Heart right ventricle (tissue), 16 donors: ENCODE measurements at regions of chr14 and their contacts with region 1.

Region 1: DNA sequence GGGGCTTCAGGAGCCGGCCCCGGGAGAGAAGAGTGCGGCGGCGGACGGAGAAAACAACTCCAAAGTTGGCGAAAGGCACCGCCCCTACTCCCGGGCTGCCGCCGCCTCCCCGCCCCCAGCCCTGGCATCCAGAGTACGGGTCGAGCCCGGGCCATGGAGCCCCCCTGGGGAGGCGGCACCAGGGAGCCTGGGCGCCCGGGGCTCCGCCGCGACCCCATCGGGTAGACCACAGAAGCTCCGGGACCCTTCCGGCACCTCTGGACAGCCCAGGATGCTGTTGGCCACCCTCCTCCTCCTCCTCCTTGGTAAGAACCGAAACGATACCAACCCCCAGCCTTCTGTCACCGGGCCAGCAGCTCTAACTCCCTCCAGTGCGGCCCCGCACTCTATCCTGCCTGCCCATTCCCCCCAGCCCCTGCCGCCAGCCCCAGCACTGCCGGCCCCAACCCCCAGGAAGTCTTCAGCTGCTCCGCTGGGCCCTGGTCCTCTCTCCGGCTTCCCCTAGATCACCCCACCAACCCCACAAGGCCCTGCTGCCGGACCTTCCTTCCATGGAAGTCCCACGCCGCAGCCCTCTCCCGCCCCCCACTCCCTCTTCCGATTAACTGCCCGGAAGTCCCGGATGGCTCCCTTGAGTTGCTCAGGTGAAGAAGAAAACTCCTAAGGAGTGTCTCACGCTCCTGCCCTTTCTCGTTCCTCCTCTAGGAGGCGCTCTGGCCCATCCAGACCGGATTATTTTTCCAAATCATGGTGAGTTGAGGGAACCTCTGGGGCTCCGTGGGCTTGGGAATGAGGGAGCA is 693 bp downstream of the LRP10 start:
- DNase-seq: peak; percentile 74 to 81
- ATAC-seq: peak; percentile 43 to 71 (median 58)
- H3K4me3 ChIP-seq: peak overlapping the region; percentile 74 to 97 (median 90)
- H3K27ac ChIP-seq: peak overlapping the region; percentile 95 to 99 (median 98)
- H3K4me1 ChIP-seq: peaks cover 2 to 30% (median 25%) of the 10 kb centered on the region in 9 donors
- H3K27me3 ChIP-seq: no peaks in the 10 kb centered on the region
- CTCF ChIP-seq: peak; percentile 83 to 97 (median 90)

Region 2: GRCh38 chr14:22726012-22726411 is 146.2 kb before region 1 on chr14:
- intact Hi-C with region 1: no loop called
- DNase-seq: no peak
- ATAC-seq: no peak
- H3K4me3 ChIP-seq: no peak overlapping the region
- H3K27ac ChIP-seq: no peak overlapping the region
- H3K4me1 ChIP-seq: no peaks in the 10 kb centered on the region
- H3K27me3 ChIP-seq: peaks cover 0 to 8% (median 0%) of the 10 kb centered on the region in 7 donors
- CTCF ChIP-seq: no peak

Region 3: GRCh38 chr14:22900081-22900799 is 28.0 kb after region 1 on chr14:
- intact Hi-C with region 1: loop called in 1 of 10 experiments (anchors 2 kb)
- DNase-seq: peak in 1 of 2 donors; percentile 44
- ATAC-seq: peak; percentile 32 to 77 (median 46)
- H3K4me3 ChIP-seq: no peak overlapping the region
- H3K27ac ChIP-seq: peak overlapping the region in 1 of 10 donors; percentile 26
- H3K4me1 ChIP-seq: peaks cover 0 to 22% (median 0%) of the 10 kb centered on the region in 9 donors
- H3K27me3 ChIP-seq: no peaks in the 10 kb centered on the region
- CTCF ChIP-seq: peak; percentile 5 to 67 (median 55)

Region 4: DNA sequence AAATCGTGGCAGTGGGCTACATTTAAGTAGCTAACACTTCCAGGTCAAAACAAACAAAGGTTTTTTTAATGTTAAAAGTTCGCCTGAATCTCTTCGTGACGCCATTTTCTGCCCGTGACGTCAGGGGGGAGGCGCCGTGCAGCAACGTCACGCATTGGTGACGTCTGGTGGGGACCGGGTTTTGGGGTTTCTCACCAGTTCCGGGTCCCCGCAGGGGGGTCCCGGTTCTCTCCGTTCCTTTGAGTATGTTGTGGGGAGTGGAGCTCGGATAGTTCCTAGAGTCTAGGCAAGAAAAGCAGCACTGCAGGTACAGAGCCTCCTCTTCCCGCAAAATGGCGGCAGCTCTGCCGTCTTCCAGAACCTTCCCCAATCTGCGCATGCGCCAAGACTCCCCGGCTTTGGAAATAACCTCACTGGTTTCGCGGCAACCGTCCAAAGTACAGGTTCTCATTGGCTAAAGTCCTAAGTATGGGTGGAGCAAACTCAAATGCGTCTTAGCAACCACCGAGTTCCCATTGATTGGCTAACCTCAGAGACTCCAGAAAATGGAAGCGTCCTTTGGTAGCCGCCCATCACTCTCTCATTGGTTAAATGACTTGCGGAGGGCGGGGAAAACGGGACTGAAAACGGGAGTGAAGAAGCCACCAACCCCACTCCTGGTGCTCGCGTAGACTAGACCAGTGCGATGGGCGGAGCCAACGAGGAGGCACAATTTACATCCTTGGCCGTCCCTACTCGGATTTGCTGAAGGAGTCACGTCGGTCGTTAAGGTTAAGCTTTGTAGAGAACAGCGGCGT is 46.8 kb after region 1 on chr14 and contains the start of gene RBM23:
- intact Hi-C with region 1: loop called in 2 of 10 experiments (anchors 5 kb)
- DNase-seq: peak; percentile 99 to 100
- ATAC-seq: peak; percentile 91 to 97 (median 95)
- H3K4me3 ChIP-seq: peak within 1 kb of the TSS; percentile 58 to 97 (median 80)
- H3K27ac ChIP-seq: peak within 1 kb of the TSS; percentile 91 to 99 (median 97)
- H3K4me1 ChIP-seq: peaks cover 7 to 52% (median 35%) of the 10 kb centered on the region in 9 donors
- H3K27me3 ChIP-seq: no peaks in the 10 kb centered on the region
- CTCF ChIP-seq: peak in 1 of 9 donors; percentile 9
- total RNA-seq, gene RBM23: 27.8 to 58.1 (median 36.1) TPM